ENCODE measurements at regions of chr2 and their contacts with region 1.

Region 1: GRCh38 chr2:109510136-109511028 is 103.4 kb downstream of the SEPTIN10 start:
- DNase-seq: peak; percentile 59
- ATAC-seq: peak; percentile 77
- H3K4me3 Mint-ChIP-seq: no peak overlapping the region
- H3K27ac Mint-ChIP-seq: no peak overlapping the region
- H3K4me1 Mint-ChIP-seq: no peaks in the 10 kb centered on the region
- H3K27me3 Mint-ChIP-seq: peaks cover 4% of the 10 kb centered on the region
- CTCF ChIP-seq: no peak

Region 2: GRCh38 chr2:108855194-108855593 is 655.2 kb before region 1 on chr2:
- CTCF ChIA-PET with region 1: no interaction called
- POLR2A ChIA-PET with region 1: no interaction called
- intact Hi-C with region 1: loop called (anchors 2 kb)
- DNase-seq: no peak
- ATAC-seq: no peak
- H3K4me3 Mint-ChIP-seq: no peak overlapping the region
- H3K27ac Mint-ChIP-seq: no peak overlapping the region
- H3K4me1 Mint-ChIP-seq: no peaks in the 10 kb centered on the region
- H3K27me3 Mint-ChIP-seq: no peaks in the 10 kb centered on the region
- CTCF ChIP-seq: no peak

Region 3: GRCh38 chr2:108927936-108928659 is 582.3 kb before region 1 on chr2:
- CTCF ChIA-PET with region 1: interaction called, 4 read pairs
- POLR2A ChIA-PET with region 1: no interaction called
- intact Hi-C with region 1: loop called (anchors 2 kb)
- DNase-seq: no peak
- ATAC-seq: no peak
- H3K4me3 Mint-ChIP-seq: no peak overlapping the region
- H3K27ac Mint-ChIP-seq: no peak overlapping the region
- H3K4me1 Mint-ChIP-seq: no peaks in the 10 kb centered on the region
- H3K27me3 Mint-ChIP-seq: peaks cover 2% of the 10 kb centered on the region
- CTCF ChIP-seq: no peak

Region 4: DNA sequence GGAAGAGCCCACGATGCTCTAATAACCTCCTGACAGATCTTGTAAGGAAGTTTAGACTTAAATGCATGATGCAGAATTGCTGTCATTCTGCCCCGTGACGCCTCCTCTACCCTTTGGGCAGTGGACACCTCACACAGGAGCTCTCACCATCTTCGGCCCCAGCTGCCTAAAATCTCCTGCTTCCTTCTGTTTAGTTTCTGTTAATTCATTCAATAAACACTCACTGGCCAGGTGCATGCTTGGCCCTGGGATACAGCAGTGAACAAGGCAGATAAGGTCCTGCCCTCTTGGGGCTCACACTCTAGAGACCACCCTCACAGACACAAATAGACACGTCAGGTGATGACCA is 22.3 kb after region 1 on chr2:
- CTCF ChIA-PET with region 1: no interaction called
- POLR2A ChIA-PET with region 1: no interaction called
- intact Hi-C with region 1: no loop called
- DNase-seq: no peak
- ATAC-seq: no peak
- H3K4me3 Mint-ChIP-seq: no peak overlapping the region
- H3K27ac Mint-ChIP-seq: no peak overlapping the region
- H3K4me1 Mint-ChIP-seq: no peaks in the 10 kb centered on the region
- H3K27me3 Mint-ChIP-seq: peaks cover 9% of the 10 kb centered on the region
- CTCF ChIP-seq: no peak

Measured in activated B cell treated with CpG ODN at 0.5 μM for 24 hours (primary cell).